ENCODE measurements at regions of chr12 and their contacts with region 1.

Region 1: DNA sequence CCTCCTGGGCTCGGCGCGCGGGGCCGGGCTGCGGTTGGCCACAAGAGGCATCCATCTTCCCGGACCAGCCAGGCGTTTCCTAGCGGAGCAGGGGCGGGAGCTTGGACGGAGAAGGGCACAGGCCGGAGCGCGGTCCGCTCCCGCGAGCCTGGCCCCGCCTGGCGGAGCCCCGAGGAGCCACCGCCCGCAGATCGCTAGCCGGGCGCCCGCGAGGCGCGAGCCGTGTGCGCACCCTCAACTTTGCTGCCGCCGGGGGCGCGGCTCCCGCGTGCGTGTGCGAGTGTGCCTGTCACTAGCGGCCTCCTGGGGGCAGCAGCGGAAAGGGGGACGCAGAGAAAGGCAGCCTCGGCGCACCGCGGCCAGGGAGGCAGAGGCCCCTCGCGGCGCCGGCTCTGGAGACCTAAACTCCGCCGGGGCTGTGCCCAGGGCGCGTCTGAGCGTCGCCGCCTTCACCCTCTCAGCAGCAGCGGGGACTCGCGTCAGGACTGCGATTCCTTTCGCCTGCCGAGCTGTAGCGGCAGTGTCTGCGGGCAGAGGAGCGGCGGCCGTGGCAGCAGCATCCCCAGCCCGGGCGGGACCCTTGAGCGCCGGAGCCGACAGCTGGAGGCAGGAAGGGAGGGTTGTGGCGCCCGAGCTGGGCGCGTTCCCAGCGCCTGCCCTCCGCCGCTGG is 644 bp upstream of the SRGAP1 start:
- DNase-seq: peak; percentile 92
- H3K4me3 Mint-ChIP-seq: peak overlapping the region; percentile 99
- H3K27ac Mint-ChIP-seq: peak overlapping the region; percentile 96
- H3K4me1 Mint-ChIP-seq: peaks cover 13% of the 10 kb centered on the region
- H3K27me3 Mint-ChIP-seq: no peaks in the 10 kb centered on the region
- CTCF ChIP-seq: peak; percentile 96

Region 2: DNA sequence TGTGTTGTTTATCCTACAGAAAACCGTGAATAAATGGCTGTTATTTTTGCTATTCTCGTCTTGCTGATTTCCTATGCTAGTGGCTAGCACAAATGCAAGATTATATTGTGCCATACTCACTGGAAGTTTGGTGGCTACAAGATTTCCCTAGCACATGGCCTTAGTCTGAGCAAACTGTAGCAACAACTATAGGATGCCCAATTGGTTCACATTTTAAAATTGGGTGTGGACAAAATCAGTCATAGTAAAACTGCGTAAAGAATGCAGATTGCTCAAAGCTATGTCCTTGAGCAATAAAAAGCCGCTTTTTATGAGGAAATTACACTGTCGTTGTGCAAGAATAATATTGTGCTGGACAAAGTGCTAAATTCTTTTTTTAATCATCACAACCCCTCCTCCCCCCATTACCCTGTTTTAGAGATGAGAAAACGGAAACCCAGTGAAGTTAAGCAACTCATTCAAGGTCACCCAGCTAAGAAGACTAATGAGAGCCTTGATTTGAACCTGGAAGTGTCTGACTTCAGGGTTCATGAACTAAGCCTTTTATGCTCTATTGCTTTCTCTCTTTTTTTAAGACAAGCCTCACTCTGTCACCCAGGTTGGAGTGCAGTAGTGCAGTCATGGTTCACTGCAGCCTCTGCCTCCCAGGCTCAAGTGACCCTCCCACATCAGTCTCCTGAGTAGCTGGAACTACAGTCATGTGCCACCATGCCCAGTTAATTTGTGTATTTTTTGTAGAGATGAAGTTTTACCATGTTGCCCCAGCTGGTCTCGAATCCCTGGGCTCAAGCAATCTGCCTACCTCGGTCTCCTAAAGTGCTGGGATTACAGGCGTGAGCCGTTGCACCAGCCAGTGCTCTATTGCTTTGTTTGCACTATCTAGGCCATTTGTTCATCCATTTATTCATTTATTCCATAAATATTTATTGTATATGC is 74.3 kb after region 1 on chr12:
- CTCF ChIA-PET with region 1: interaction called, 28 read pairs
- POLR2A ChIA-PET with region 1: interaction called, 101 read pairs
- intact Hi-C with region 1: loop called (anchors 1 kb)
- DNase-seq: peak; percentile 97
- H3K4me3 Mint-ChIP-seq: peak overlapping the region; percentile 0
- H3K27ac Mint-ChIP-seq: peak overlapping the region; percentile 89
- H3K4me1 Mint-ChIP-seq: peaks cover 80% of the 10 kb centered on the region
- H3K27me3 Mint-ChIP-seq: no peaks in the 10 kb centered on the region
- CTCF ChIP-seq: no peak

Region 3: GRCh38 chr12:63978519-63978918 is 134.7 kb after region 1 on chr12:
- CTCF ChIA-PET with region 1: interaction called, 5 read pairs
- POLR2A ChIA-PET with region 1: interaction called, 16 read pairs
- intact Hi-C with region 1: loop called (anchors 5 kb)
- DNase-seq: peak; percentile 87
- H3K4me3 Mint-ChIP-seq: no peak overlapping the region
- H3K27ac Mint-ChIP-seq: peak overlapping the region; percentile 75
- H3K4me1 Mint-ChIP-seq: peaks cover 17% of the 10 kb centered on the region
- H3K27me3 Mint-ChIP-seq: no peaks in the 10 kb centered on the region
- CTCF ChIP-seq: no peak

Region 4: GRCh38 chr12:64083285-64084210 is 239.7 kb after region 1 on chr12:
- CTCF ChIA-PET with region 1: interaction called, 23 read pairs
- POLR2A ChIA-PET with region 1: interaction called, 29 read pairs
- intact Hi-C with region 1: loop called (anchors 5 kb)
- DNase-seq: peak; percentile 86
- H3K4me3 Mint-ChIP-seq: peak overlapping the region; percentile 41
- H3K27ac Mint-ChIP-seq: peak overlapping the region; percentile 57
- H3K4me1 Mint-ChIP-seq: peaks cover 23% of the 10 kb centered on the region
- H3K27me3 Mint-ChIP-seq: no peaks in the 10 kb centered on the region
- CTCF ChIP-seq: no peak

Region 5: GRCh38 chr12:64171715-64172114 is 327.9 kb after region 1 on chr12:
- CTCF ChIA-PET with region 1: interaction called, 3 read pairs
- POLR2A ChIA-PET with region 1: interaction called, 16 read pairs
- intact Hi-C with region 1: no loop called
- DNase-seq: peak; percentile 72
- H3K4me3 Mint-ChIP-seq: peak overlapping the region; percentile 45
- H3K27ac Mint-ChIP-seq: peak overlapping the region; percentile 97
- H3K4me1 Mint-ChIP-seq: peaks cover 29% of the 10 kb centered on the region
- H3K27me3 Mint-ChIP-seq: no peaks in the 10 kb centered on the region
- CTCF ChIP-seq: no peak

Region 6: DNA sequence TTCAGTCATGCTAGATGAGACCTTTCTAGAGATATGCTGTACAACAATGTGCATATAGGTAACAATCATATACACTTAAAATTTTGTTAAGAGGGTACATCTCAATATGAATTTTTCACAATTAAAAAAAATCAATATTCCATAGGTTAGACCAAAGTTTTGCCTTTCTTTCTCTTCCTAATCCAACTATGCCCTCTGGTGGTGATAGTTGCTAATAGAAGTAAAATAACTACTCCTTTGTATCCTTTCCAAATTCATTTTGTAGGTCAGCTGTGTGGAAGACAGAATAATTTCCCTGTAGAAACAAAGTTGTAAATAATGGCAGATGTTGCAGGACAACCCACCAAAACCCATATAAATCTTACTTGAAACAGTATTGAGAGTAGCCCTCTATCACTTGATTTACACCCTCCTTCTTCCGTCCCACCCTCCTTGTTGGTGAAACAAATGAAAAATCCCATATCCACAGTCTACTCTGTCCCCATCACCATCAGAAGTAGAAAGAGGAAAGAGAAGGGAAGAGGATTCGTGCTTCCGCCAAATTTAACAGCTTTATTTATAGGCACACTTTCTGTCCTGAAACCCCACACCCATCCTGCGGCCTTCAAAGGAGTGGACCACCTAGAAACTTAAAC is 412.4 kb after region 1 on chr12:
- CTCF ChIA-PET with region 1: interaction called, 101 read pairs
- POLR2A ChIA-PET with region 1: interaction called, 11 read pairs
- intact Hi-C with region 1: loop called (anchors 1 kb)
- DNase-seq: peak; percentile 76
- H3K4me3 Mint-ChIP-seq: no peak overlapping the region
- H3K27ac Mint-ChIP-seq: no peak overlapping the region
- H3K4me1 Mint-ChIP-seq: peaks cover 10% of the 10 kb centered on the region
- H3K27me3 Mint-ChIP-seq: no peaks in the 10 kb centered on the region
- CTCF ChIP-seq: peak; percentile 68